Calu3 (cell line): ENCODE measurements at regions of chr6 and their contacts with region 1.

Region 1: GRCh38 chr6:3977875-3978711 is 100.8 kb downstream of the FAM217A start:
- DNase-seq: peak; percentile 29
- H3K4me3 Mint-ChIP-seq: no peak overlapping the region
- H3K27ac Mint-ChIP-seq: no peak overlapping the region
- H3K4me1 Mint-ChIP-seq: peaks cover 8% of the 10 kb centered on the region
- H3K27me3 Mint-ChIP-seq: no peaks in the 10 kb centered on the region
- CTCF ChIP-seq: peak; percentile 26

Region 2: DNA sequence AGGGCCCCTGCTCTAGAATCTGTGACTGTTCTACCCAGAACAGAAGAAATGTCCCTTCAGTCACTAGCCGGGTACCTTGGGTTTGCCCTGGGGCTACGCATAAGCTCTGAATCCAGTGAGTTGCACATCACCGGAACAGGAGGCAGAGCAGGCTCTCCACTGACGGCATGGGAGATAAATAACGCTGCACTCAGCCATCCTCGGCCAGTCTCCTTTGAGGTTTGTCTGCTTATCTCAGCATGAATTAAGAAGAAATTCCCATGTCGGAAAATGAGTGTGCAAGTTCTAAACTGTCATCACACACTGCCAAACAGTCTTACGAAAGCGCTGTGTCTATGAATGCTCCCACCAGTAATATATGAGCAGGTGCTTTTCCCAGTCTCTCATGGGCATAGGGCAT is 38.1 kb before region 1 on chr6:
- CTCF ChIA-PET with region 1: no interaction called
- intact Hi-C with region 1: loop called (anchors 5 kb)
- DNase-seq: no peak
- H3K4me3 Mint-ChIP-seq: no peak overlapping the region
- H3K27ac Mint-ChIP-seq: no peak overlapping the region
- H3K4me1 Mint-ChIP-seq: no peaks in the 10 kb centered on the region
- H3K27me3 Mint-ChIP-seq: no peaks in the 10 kb centered on the region
- CTCF ChIP-seq: no peak

Region 3: GRCh38 chr6:3962957-3963303 is 15.2 kb before region 1 on chr6:
- CTCF ChIA-PET with region 1: no interaction called
- intact Hi-C with region 1: no loop called
- DNase-seq: no peak
- H3K4me3 Mint-ChIP-seq: no peak overlapping the region
- H3K27ac Mint-ChIP-seq: peak overlapping the region; percentile 17
- H3K4me1 Mint-ChIP-seq: peaks cover 28% of the 10 kb centered on the region
- H3K27me3 Mint-ChIP-seq: no peaks in the 10 kb centered on the region
- CTCF ChIP-seq: no peak